MCF 10A (cell line): ENCODE measurements at regions of chr12 and their contacts with region 1.

Region 1: DNA sequence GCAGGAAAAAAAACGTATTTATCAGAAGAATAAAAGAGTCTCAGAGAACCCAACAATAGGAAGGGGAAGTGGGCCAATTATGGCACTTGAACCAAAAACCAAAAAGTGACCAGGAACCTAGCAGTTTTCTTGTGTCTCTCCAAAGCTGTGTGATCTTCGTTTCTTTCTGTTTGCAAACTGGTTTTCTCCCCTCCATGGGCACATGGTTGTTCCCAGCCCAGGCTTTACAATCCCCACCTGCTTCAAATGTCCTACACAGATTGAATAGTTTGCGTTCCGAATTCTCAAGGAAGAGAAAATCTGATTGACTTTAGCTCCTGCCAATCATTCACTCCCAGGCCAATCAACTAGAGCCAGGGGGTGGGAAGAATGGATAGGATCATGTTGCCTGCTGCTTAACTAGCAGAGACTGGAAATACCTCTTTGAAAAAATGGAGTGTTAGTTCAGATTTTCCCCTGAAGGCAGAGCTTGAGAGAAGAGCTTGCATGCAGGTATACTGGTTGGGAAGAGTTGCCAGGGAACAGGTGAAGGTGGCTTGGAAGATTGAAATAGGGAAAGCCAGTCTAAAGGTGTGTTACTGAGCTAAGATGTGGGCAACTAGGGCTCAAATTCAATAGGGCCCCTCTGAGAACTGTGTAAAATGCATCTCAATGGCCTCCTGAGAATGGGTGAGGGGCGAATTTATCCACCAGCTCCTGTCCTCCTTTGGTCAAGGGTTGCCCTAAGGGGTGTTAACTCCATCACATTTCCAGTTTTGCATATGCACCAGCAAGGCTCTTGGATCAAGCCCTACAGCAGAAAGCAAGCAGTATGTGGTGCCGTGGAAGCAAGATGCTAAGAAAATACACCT is 106.4 kb upstream of the SRRM4 start:
- DNase-seq: no peak
- H3K4me3 Mint-ChIP-seq: no peak overlapping the region
- H3K27ac Mint-ChIP-seq: no peak overlapping the region
- H3K4me1 Mint-ChIP-seq: no peaks in the 10 kb centered on the region
- H3K27me3 Mint-ChIP-seq: no peaks in the 10 kb centered on the region
- CTCF ChIP-seq: no peak

Region 2: GRCh38 chr12:118727196-118727978 is 147.5 kb before region 1 on chr12:
- CTCF ChIA-PET with region 1: no interaction called
- POLR2A ChIA-PET with region 1: no interaction called
- intact Hi-C with region 1: loop called (anchors 10 kb)
- DNase-seq: no peak
- H3K4me3 Mint-ChIP-seq: no peak overlapping the region
- H3K27ac Mint-ChIP-seq: no peak overlapping the region
- H3K4me1 Mint-ChIP-seq: no peaks in the 10 kb centered on the region
- H3K27me3 Mint-ChIP-seq: no peaks in the 10 kb centered on the region
- CTCF ChIP-seq: no peak